ENCODE measurements at regions of chr22 and their contacts with region 1.

Region 1: DNA sequence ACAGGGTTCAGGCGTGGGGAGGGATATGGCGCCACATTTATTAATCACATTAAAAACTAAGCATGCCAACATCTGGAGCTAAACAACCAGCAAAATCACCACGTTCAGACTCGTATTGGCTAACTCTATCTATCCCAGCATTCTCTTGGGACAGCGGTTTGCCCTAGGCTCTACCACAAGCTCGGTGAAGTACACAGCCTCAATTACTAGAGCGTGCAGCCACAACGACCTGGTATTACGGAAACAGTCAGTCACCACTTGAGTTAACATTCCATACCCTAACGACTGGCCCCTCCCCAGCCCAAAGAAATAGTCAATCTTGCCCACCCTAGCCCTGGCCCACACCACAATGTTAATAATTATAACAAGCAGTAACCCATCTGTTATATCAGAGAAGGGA is 32.1 kb downstream of the APOL5 start:
- DNase-seq: peak; percentile 98
- H3K4me3 ChIP-seq: peak overlapping the region; percentile 46
- H3K27ac ChIP-seq: peak overlapping the region; percentile 99
- H3K4me1 ChIP-seq: peaks cover 100% of the 10 kb centered on the region
- CTCF ChIP-seq: no peak

Region 2: DNA sequence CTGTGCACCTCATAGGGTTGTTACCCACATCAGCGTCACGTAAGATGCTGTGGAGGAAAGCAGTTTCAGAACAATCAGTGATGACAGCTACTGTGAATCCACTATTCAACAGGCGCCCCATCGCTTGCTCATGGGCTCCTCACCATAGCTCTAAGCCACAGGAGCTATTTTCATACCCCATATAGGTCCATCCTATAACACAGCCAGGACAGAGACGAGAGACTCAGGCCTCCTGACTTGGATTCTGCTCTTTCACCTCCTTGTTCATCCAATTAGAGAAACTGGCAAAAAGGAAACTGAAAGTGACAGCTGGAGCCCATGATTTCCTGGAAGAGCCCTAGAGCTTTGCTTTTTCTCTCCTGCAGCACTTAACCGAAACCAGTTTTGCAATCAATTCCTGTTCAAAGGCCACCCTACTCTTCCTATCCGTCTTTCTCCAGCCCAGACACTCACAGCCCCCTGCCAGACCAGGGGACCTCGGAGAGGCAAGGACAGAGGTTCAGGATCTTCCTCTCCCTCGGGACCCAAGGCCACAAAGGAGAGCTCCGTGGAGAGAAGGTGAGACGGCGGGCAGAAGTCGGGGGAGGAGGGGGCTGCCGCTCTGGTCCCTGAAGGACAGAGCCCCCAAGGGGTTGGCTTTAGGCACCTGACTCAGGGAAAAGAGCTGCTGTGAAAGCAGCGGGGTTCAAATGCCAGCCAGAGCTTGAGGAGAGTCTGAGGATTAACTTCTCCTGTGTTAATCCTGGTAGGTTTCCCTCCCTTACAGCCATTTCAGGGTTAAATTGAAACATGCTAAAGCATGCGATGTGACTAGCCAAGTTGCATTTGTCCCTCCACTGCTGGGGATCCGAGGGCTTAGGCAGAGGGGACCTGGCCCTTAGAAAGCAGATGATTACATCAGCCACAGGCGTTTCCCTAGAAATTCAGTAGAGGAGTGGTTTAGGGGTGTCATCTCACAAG is 101.5 kb before region 1 on chr22 and contains the start of gene APOL6:
- CTCF ChIA-PET with region 1: no interaction called
- POLR2A ChIA-PET with region 1: interaction called, 6 read pairs
- intact Hi-C with region 1: loop called (anchors 1 kb)
- DNase-seq: peak; percentile 81
- H3K4me3 ChIP-seq: peak within 1 kb of the TSS; percentile 76
- H3K27ac ChIP-seq: peak within 1 kb of the TSS; percentile 90
- H3K4me1 ChIP-seq: peaks cover 51% of the 10 kb centered on the region
- CTCF ChIP-seq: no peak
- total RNA-seq, gene APOL6: 27.8 and 28.8 TPM in 2 replicates

Region 3: GRCh38 chr22:35660291-35661127 is 89.3 kb before region 1 on chr22:
- CTCF ChIA-PET with region 1: no interaction called
- POLR2A ChIA-PET with region 1: no interaction called
- intact Hi-C with region 1: no loop called
- DNase-seq: peak; percentile 77
- H3K4me3 ChIP-seq: peak overlapping the region; percentile 27
- H3K27ac ChIP-seq: peak overlapping the region; percentile 90
- H3K4me1 ChIP-seq: peaks cover 27% of the 10 kb centered on the region
- CTCF ChIP-seq: no peak

Region 4: DNA sequence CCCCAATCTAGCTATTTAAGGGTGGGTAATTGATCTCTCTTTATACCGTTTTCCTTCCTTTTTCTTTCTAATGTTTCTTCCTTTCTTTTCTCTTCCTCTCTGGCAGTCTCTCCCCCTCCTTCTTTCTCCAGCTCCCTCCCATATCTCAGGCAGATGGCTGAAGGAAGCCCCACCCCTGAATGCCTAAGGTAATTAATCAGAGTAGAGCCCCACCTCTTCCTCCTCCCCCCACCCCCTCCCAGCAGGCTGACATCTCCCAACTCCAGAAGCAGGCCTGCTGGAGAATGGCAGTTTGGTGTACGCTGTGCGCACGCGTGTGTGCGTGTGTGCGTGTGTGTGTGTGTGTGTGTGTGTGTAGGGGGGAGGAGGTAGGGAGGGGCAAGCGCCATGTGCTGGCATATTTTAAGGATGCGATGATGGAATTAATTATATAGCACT is 90.5 kb after region 1 on chr22:
- CTCF ChIA-PET with region 1: no interaction called
- POLR2A ChIA-PET with region 1: no interaction called
- intact Hi-C with region 1: loop called (anchors 5 kb)
- DNase-seq: peak; percentile 74
- H3K4me3 ChIP-seq: peak overlapping the region; percentile 74
- H3K27ac ChIP-seq: peak overlapping the region; percentile 67
- H3K4me1 ChIP-seq: peaks cover 81% of the 10 kb centered on the region
- CTCF ChIP-seq: no peak

Region 5: GRCh38 chr22:35900483-35901168 is 150.8 kb after region 1 on chr22:
- CTCF ChIA-PET with region 1: no interaction called
- POLR2A ChIA-PET with region 1: interaction called, 13 read pairs
- intact Hi-C with region 1: loop called (anchors 5 kb)
- DNase-seq: no peak
- H3K4me3 ChIP-seq: peak overlapping the region; percentile 29
- H3K27ac ChIP-seq: peak overlapping the region; percentile 78
- H3K4me1 ChIP-seq: peaks cover 86% of the 10 kb centered on the region
- CTCF ChIP-seq: no peak

Region 6: DNA sequence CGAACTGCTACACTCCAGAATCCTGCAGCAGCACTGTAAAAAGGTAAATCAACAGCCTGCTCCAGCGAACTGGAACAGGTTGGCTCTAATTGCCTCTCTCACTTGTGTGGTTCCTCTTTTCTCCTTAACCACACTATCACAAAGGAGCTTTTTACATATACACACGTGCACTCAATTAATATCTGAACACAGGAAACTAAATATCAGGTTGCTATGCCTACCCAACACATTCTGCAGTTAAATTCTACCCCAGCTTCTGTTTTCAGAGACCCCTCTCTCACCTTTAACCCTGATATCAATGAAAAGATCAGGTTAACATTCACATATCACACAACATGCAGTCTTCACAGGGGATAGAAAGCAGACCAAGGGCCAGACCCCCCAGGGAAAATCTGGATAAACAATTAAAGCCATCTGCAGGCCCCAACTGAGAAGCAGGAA is 267.9 kb after region 1 on chr22:
- CTCF ChIA-PET with region 1: interaction called, 3 read pairs
- POLR2A ChIA-PET with region 1: interaction called, 5 read pairs
- intact Hi-C with region 1: loop called (anchors 5 kb)
- DNase-seq: peak; percentile 97
- H3K4me3 ChIP-seq: peak overlapping the region; percentile 56
- H3K27ac ChIP-seq: peak overlapping the region; percentile 98
- H3K4me1 ChIP-seq: peaks cover 83% of the 10 kb centered on the region
- CTCF ChIP-seq: no peak

Measured in OCI-LY7 (cell line).